MCF 10A (cell line): ENCODE measurements at regions of chr2 and their contacts with region 1.

Region 1: GRCh38 chr2:172234716-172235691 is 132.3 kb upstream of the DLX2 start:
- DNase-seq: no peak
- H3K4me3 Mint-ChIP-seq: no peak overlapping the region
- H3K27ac Mint-ChIP-seq: no peak overlapping the region
- H3K4me1 Mint-ChIP-seq: peaks cover 25% of the 10 kb centered on the region
- H3K27me3 Mint-ChIP-seq: no peaks in the 10 kb centered on the region
- CTCF ChIP-seq: no peak

Region 2: GRCh38 chr2:172200495-172201085 is 34.4 kb before region 1 on chr2:
- CTCF ChIA-PET with region 1: interaction called, 5 read pairs
- POLR2A ChIA-PET with region 1: interaction called, 155 read pairs
- intact Hi-C with region 1: no loop called
- DNase-seq: peak; percentile 51
- H3K4me3 Mint-ChIP-seq: no peak overlapping the region
- H3K27ac Mint-ChIP-seq: peak overlapping the region; percentile 49
- H3K4me1 Mint-ChIP-seq: peaks cover 30% of the 10 kb centered on the region
- H3K27me3 Mint-ChIP-seq: no peaks in the 10 kb centered on the region
- CTCF ChIP-seq: peak; percentile 41

Region 3: GRCh38 chr2:172253190-172254052 is 18.4 kb after region 1 on chr2:
- CTCF ChIA-PET with region 1: interaction called, 33 read pairs
- POLR2A ChIA-PET with region 1: interaction called, 245 read pairs
- intact Hi-C with region 1: no loop called
- DNase-seq: peak; percentile 100
- H3K4me3 Mint-ChIP-seq: peak overlapping the region; percentile 56
- H3K27ac Mint-ChIP-seq: peak overlapping the region; percentile 100
- H3K4me1 Mint-ChIP-seq: peaks cover 55% of the 10 kb centered on the region
- H3K27me3 Mint-ChIP-seq: no peaks in the 10 kb centered on the region
- CTCF ChIP-seq: no peak

Region 4: DNA sequence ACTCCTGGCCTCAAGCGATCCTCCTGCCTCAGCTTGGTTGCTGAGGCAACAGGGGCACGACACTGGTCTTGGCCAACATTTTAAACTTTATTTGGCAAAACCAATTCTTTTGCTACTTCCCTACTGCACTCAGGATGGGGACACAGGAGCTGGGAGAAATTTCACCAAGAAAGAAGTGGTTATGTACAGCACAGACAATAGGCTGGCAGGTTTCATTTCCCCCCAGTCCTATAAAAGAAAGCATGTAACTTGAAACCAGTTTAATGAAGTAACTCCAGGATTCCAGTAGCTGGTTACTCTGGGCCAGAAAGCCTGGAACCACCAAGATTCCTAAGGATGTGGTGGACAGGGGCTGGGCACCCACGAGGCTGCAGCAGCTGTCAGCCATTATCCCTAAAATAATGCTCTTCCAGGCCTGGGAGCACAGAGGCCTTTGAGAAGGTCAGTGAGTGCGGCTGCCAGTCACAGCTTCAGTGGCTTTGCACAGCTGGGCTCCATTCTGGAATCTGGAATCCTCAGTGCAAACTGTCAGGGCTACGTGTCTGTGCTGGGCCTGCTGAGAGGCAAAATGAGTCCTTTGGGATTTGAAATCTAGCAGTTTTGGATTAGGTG is 50.1 kb after region 1 on chr2:
- CTCF ChIA-PET with region 1: no interaction called
- POLR2A ChIA-PET with region 1: interaction called, 23 read pairs
- intact Hi-C with region 1: loop called (anchors 5 kb)
- DNase-seq: peak; percentile 41
- H3K4me3 Mint-ChIP-seq: no peak overlapping the region
- H3K27ac Mint-ChIP-seq: no peak overlapping the region
- H3K4me1 Mint-ChIP-seq: peaks cover 22% of the 10 kb centered on the region
- H3K27me3 Mint-ChIP-seq: no peaks in the 10 kb centered on the region
- CTCF ChIP-seq: no peak

Region 5: GRCh38 chr2:172408143-172408766 is 173.3 kb after region 1 on chr2:
- CTCF ChIA-PET with region 1: no interaction called
- POLR2A ChIA-PET with region 1: interaction called, 32 read pairs
- intact Hi-C with region 1: no loop called
- DNase-seq: peak; percentile 97
- H3K4me3 Mint-ChIP-seq: peak overlapping the region; percentile 22
- H3K27ac Mint-ChIP-seq: peak overlapping the region; percentile 88
- H3K4me1 Mint-ChIP-seq: peaks cover 37% of the 10 kb centered on the region
- H3K27me3 Mint-ChIP-seq: no peaks in the 10 kb centered on the region
- CTCF ChIP-seq: no peak

Region 6: GRCh38 chr2:172442072-172442895 is 207.3 kb after region 1 on chr2:
- CTCF ChIA-PET with region 1: interaction called, 3 read pairs
- POLR2A ChIA-PET with region 1: interaction called, 89 read pairs
- intact Hi-C with region 1: no loop called
- DNase-seq: peak; percentile 99
- H3K4me3 Mint-ChIP-seq: peak overlapping the region; percentile 65
- H3K27ac Mint-ChIP-seq: peak overlapping the region; percentile 98
- H3K4me1 Mint-ChIP-seq: peaks cover 45% of the 10 kb centered on the region
- H3K27me3 Mint-ChIP-seq: no peaks in the 10 kb centered on the region
- CTCF ChIP-seq: no peak

Region 7: DNA sequence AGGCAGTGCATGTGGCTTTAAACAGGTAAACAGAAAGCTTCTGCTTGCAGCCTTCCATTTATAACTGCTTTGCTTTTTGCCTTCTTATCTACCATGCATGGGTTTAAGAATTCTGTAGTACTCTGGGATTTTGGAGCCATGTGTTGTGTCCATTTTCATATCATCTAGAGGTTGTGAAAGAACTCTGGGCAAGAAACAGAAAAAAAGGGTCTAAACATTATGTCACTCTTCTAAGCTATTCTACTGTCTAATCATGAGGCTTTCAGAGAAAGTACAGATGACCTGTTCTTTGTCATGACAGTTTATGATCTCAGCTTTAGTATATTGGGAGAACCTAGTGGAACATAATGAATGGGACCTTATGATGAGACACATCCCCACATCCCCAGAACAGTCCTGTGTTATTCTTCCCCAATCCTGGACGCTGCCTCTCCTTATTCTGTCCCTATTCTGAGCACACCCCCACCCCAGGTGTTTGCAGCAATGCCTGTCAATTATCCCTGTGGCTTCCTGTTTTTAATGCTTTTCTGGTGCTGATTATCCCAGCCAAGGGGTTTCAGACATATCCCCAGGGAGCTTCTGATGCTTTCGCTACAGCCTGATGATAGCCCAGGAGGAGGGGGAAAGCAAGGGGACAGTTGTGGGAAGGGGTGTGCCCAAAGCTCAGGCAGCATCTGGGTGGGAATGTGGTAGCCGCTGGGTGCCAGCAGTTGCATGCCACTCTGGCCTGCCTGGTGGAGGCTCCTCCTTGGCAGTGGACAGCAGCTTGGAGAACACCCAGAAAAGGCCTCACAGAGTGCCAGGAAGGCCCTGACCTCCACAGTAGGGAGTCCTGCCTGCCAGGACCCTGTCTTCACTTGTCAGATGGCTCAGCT is 671.2 kb after region 1 on chr2:
- CTCF ChIA-PET with region 1: no interaction called
- POLR2A ChIA-PET with region 1: no interaction called
- intact Hi-C with region 1: no loop called
- DNase-seq: no peak
- H3K4me3 Mint-ChIP-seq: no peak overlapping the region
- H3K27ac Mint-ChIP-seq: no peak overlapping the region
- H3K4me1 Mint-ChIP-seq: no peaks in the 10 kb centered on the region
- H3K27me3 Mint-ChIP-seq: peaks cover 11% of the 10 kb centered on the region
- CTCF ChIP-seq: no peak